Activated naive CD4-positive, alpha-beta T cell treated with anti-CD3 and anti-CD28 coated beads for 36 hours (primary cell): ENCODE measurements at regions of chr3 and their contacts with region 1.

Region 1: GRCh38 chr3:183427876-183428446 is 458 bp downstream of the MCF2L2 start:
- DNase-seq: peak; percentile 40
- H3K4me3 Mint-ChIP-seq: peak overlapping the region; percentile 79
- H3K27ac Mint-ChIP-seq: no peak overlapping the region
- H3K4me1 Mint-ChIP-seq: peaks cover 27% of the 10 kb centered on the region
- H3K27me3 Mint-ChIP-seq: peaks cover 14% of the 10 kb centered on the region

Region 2: DNA sequence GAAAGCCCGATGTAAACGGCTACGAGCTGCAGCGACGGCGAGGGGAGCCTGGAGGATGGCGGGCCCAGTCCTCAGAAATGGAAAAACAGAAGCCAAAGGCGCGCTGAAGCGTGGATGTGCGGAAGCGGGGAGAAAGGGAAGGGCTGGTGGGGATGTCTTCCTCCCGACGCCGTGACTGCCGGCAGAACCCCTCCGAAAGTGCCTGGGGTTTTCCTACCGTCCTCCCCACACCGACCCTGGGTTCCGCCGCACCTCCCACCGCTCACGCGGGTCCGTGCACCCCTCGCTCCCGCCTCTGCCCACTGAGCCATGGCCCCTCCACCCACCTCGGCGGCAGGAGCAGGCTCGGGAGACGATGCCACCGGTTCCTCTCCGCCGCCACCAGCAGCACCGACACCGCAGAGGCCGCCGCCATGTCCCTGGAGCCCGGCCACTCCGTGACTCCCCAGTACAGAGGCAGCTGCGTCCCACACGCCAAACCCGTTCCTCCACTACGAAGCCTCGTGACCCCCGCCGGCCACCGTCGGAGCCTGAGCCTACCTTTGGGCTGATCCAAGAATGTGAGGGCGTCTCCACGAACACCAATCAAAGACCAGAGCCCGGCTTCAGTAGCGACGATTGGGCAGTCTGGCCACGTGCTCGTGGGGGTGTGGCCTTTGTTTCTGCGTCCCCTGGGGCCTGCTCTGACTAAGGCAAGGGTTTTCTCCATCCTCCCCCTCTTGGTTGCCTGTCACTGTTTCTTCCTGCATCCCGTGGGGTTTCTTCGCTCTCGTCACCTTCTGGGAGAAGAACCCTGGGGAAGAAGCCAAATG is 328.7 kb before region 1 on chr3 and contains the start of gene MCCC1:
- CTCF ChIA-PET with region 1: no interaction called
- intact Hi-C with region 1: loop called (anchors 1 kb)
- DNase-seq: peak; percentile 99
- H3K4me3 Mint-ChIP-seq: peak within 1 kb of the TSS; percentile 97
- H3K27ac Mint-ChIP-seq: peak within 1 kb of the TSS; percentile 91
- H3K4me1 Mint-ChIP-seq: peaks cover 33% of the 10 kb centered on the region
- H3K27me3 Mint-ChIP-seq: no peaks in the 10 kb centered on the region
- total RNA-seq, gene MCCC1: 21.0 to 24.9 TPM

Region 3: DNA sequence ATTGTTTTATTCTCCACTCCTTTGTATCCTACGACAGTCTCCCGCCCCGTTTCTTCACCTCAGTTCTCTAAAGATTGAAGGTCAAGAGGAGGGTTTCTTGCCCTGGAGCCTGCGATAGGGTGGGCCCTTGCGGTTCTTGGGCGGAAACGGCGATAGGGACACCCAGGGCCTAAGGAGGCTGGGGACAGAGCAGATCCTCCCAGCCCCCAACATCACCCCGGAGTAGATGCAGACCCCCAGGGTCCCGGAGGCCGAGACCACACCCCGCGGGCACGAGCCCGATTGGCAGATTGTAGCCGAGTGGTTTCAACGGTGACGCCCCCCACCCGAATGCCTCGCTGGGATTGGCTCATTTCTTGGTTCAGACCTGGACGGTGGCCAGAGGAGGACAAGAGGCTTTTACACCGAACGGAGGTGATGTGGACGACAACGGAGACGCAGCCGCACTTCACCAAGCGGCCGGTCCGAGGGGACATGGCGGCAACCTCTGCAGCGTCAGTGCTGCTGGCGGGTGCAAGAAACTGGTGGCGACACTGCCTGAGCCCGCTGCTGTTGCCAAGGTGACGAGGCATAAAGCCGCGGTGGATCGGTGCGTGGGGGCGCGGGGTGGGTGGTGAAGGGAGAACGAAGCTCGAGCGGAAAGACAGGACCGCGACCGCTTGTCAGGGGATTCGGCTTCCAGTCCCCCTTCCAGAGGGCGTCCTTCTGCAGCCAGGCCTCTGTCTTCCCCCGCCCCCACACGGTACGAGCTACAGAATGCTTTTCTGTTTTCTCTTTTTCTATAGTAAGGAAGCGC is 19.4 kb after region 1 on chr3:
- CTCF ChIA-PET with region 1: no interaction called
- intact Hi-C with region 1: loop called (anchors 1 kb)
- DNase-seq: peak; percentile 82
- H3K4me3 Mint-ChIP-seq: peak overlapping the region; percentile 91
- H3K27ac Mint-ChIP-seq: peak overlapping the region; percentile 46
- H3K4me1 Mint-ChIP-seq: peaks cover 10% of the 10 kb centered on the region
- H3K27me3 Mint-ChIP-seq: no peaks in the 10 kb centered on the region

Region 4: GRCh38 chr3:183697610-183698317 is 269.8 kb after region 1 on chr3 and contains the start of gene YEATS2:
- CTCF ChIA-PET with region 1: no interaction called
- intact Hi-C with region 1: loop called (anchors 5 kb)
- DNase-seq: peak; percentile 79
- H3K4me3 Mint-ChIP-seq: peak within 1 kb of the TSS; percentile 80
- H3K27ac Mint-ChIP-seq: peak within 1 kb of the TSS; percentile 91
- H3K4me1 Mint-ChIP-seq: peaks cover 28% of the 10 kb centered on the region
- H3K27me3 Mint-ChIP-seq: no peaks in the 10 kb centered on the region
- total RNA-seq, gene YEATS2: 38.1 to 39.0 TPM

Region 5: GRCh38 chr3:183825456-183826161 is 397.6 kb after region 1 on chr3 and contains the start of gene MAP6D1:
- CTCF ChIA-PET with region 1: no interaction called
- intact Hi-C with region 1: loop called (anchors 2 kb)
- DNase-seq: peak; percentile 55
- H3K4me3 Mint-ChIP-seq: peak within 1 kb of the TSS; percentile 70
- H3K27ac Mint-ChIP-seq: no peak within 1 kb of the TSS
- H3K4me1 Mint-ChIP-seq: peaks cover 16% of the 10 kb centered on the region
- H3K27me3 Mint-ChIP-seq: no peaks in the 10 kb centered on the region
- total RNA-seq, gene MAP6D1: 1.1 to 1.4 TPM